GM12878 (cell line): ENCODE measurements at regions of chr14 and their contacts with region 1.

Region 1: DNA sequence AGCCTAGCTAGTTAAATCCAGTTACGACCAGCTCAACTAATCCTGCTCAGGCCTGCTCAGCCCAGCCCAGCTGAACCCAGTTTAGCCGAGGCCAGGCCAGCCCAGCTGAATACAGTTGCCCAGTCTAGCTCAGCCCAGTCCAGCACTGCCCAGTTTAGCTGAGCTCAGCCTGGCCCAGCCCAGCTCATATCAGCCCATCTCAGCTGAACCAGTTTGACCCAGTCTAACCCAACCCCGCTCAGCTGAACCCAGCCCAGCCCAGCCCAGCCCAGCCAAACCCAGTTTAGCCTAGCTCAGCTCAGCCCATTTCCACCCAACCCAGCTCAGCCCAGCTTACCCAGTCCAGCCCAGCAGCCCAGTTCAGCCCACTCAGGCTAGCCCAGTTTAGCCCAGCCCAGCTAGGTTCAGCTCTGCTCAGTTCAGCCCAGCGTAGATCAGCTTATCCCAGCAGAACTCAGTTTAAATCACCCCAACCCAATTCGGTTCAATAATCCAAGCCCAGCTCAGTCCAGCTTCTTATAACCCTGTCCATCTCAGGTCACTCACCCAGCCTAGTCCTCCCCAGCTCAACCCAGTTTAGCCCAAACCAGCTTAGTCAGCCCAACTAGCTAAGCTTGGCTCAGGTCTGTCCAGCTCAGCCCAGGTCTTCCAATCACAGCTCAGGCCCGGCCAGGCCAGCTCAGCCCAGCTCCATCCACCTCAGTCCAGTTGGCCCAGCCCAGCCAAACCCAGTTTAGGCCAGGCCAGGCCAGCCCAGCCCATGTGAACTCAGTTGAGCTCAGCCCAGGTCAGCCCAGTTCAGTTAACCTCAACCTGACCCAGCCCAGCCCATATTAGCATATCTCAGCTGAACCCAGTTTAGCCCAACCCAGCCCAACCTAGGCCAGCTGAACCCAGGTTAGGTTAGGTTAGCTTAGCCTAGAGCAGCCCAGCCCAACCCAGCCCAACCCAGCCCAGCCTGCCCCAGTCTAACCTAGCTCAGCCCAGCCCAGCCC is 76.7 kb downstream of the TMEM121 start:
- DNase-seq: no peak
- ATAC-seq: no peak
- H3K4me3 ChIP-seq: no peak overlapping the region
- H3K27ac ChIP-seq: no peak overlapping the region
- H3K4me1 ChIP-seq: no peaks in the 10 kb centered on the region; the same call in 1 of the 2 replicates
- H3K27me3 ChIP-seq: no peaks in the 10 kb centered on the region
- CTCF ChIP-seq: no peak
- EP300 ChIP-seq: no peak
- POLR2A ChIP-seq: no peak
- RAD21 ChIP-seq: no peak

Region 2: DNA sequence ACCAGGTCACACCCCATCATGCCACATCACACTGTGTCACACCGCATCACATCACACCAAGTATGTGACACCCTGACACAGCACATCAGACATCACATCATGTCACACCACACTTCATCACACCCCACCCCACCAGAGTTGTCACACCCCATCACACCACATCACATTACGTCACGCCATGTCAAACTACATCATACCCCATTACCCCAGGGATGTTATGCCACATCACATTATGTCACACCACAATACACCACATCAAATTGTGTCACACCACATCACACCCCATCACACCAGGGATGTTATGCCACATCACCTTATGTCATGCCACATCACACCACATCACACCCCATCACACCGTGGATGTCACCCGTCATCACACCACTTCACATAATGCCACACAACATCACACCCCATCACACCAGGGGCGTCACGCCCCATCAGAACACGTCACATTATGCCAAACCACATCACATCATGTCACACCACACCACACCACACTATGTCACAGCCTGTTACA is 56.9 kb after region 1 on chr14:
- CTCF ChIA-PET with region 1: no interaction called
- POLR2A ChIA-PET with region 1: no interaction called
- RAD21 ChIA-PET with region 1: no interaction called
- SMC1A ChIA-PET with region 1: no interaction called
- in situ Hi-C with region 1: loop called (anchors 10 kb)
- intact Hi-C with region 1: no loop called
- DNase-seq: no peak
- ATAC-seq: no peak
- H3K4me3 ChIP-seq: no peak overlapping the region
- H3K27ac ChIP-seq: no peak overlapping the region
- H3K4me1 ChIP-seq: no peaks in the 10 kb centered on the region
- H3K27me3 ChIP-seq: no peaks in the 10 kb centered on the region
- CTCF ChIP-seq: no peak
- EP300 ChIP-seq: no peak
- POLR2A ChIP-seq: no peak
- RAD21 ChIP-seq: no peak

Region 3: GRCh38 chr14:105748194-105748578 is 145.1 kb after region 1 on chr14:
- CTCF ChIA-PET with region 1: no interaction called
- POLR2A ChIA-PET with region 1: no interaction called
- RAD21 ChIA-PET with region 1: no interaction called
- SMC1A ChIA-PET with region 1: no interaction called
- in situ Hi-C with region 1: no loop called
- intact Hi-C with region 1: no loop called
- DNase-seq: no peak
- ATAC-seq: peak; percentile 81
- H3K4me3 ChIP-seq: no peak overlapping the region
- H3K27ac ChIP-seq: no peak overlapping the region
- H3K4me1 ChIP-seq: no peaks in the 10 kb centered on the region
- H3K27me3 ChIP-seq: no peaks in the 10 kb centered on the region; a peak in 2 of 4 replicates
- CTCF ChIP-seq: no peak
- EP300 ChIP-seq: no peak
- POLR2A ChIP-seq: no peak
- RAD21 ChIP-seq: no peak